ENCODE measurements at regions of chr4 and their contacts with region 1.

Region 1: GRCh38 chr4:176789955-176790354 is 2.8 kb downstream of the VEGFC start:
- DNase-seq: no peak
- H3K4me3 ChIP-seq: peak overlapping the region in 1 of 59 donors; percentile 80
- H3K27ac ChIP-seq: no peak overlapping the region
- H3K27me3 ChIP-seq: peaks cover 0 to 13% (median 0%) of the 10 kb centered on the region in 45 donors
- CTCF ChIP-seq: peak in 55 of 56 donors; percentile 20 to 71 (median 55)

Region 2: DNA sequence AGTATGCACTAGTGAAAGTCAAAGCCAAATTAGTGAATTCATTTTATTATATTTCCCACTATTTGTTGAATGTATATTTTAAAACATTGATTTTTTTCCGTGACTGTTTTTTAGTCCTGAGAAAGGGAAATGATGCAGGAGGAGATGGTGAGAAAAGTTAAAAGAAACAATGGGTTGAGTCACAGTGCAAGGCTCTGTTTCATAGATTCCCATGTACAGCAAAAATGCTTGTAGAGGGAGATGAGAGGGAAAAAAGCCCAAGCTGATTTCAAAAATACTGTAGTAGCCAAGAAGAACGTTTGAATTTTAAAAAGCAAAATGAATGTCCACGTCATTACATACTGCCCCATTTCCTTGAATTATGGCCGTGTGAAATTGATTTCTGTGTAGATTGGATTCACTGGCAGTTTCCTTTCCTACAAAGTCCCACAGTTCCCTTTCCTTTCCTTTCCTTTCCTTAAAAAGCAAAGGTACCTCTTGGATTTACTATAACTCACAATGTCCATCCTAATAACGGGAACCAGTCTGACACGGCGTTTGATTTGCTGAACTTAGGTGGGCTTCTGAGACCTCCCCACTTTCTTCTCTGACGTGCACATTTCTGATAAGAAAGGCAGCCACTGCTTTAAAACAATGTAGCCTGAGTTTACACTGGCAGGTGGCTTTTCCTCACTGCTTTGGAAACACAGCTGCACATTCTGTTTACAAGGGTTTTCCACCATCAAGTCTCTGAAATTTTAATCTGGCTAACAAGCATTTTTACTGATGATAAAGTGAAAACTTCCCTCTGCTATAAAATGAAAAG is 406.5 kb before region 1 on chr4:
- intact Hi-C with region 1: loop called (anchors 5 to 10 kb)
- DNase-seq: no peak
- H3K4me3 ChIP-seq: peak overlapping the region in 9 of 59 donors; percentile 3 to 46 (median 25)
- H3K27ac ChIP-seq: no peak overlapping the region
- H3K27me3 ChIP-seq: no peaks in the 10 kb centered on the region
- CTCF ChIP-seq: no peak

Region 3: DNA sequence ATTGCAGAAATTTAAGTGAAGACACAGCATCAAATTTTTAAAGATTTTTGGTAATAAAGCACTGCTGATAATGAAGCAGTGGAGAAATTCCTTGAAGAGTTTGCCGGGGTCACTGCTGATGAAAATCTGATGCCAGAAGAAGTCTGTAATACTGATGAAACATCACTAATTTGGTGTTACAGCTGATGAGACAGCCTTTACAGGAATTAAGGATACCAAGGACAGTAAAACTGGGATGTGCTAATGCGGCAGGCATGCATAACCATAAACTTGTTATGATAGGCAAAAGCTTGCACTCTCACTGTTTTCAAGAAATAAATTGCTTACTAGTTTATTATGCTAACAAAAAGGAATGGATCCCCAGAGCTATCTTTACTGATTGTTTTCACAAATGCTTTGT is 55.7 kb after region 1 on chr4:
- intact Hi-C with region 1: no loop called
- DNase-seq: no peak
- H3K4me3 ChIP-seq: no peak overlapping the region
- H3K27ac ChIP-seq: no peak overlapping the region
- H3K27me3 ChIP-seq: no peaks in the 10 kb centered on the region
- CTCF ChIP-seq: no peak

Measured in dorsolateral prefrontal cortex (tissue), 120 donors.